ENCODE measurements at regions of chr11 and their contacts with region 1.

Region 1: GRCh38 chr11:83159902-83160865 is 3.3 kb downstream of the PCF11 start:
- DNase-seq: no peak
- H3K4me3 ChIP-seq: peak overlapping the region; percentile 92
- H3K27me3 ChIP-seq: no peaks in the 10 kb centered on the region
- CTCF ChIP-seq: no peak

Region 2: DNA sequence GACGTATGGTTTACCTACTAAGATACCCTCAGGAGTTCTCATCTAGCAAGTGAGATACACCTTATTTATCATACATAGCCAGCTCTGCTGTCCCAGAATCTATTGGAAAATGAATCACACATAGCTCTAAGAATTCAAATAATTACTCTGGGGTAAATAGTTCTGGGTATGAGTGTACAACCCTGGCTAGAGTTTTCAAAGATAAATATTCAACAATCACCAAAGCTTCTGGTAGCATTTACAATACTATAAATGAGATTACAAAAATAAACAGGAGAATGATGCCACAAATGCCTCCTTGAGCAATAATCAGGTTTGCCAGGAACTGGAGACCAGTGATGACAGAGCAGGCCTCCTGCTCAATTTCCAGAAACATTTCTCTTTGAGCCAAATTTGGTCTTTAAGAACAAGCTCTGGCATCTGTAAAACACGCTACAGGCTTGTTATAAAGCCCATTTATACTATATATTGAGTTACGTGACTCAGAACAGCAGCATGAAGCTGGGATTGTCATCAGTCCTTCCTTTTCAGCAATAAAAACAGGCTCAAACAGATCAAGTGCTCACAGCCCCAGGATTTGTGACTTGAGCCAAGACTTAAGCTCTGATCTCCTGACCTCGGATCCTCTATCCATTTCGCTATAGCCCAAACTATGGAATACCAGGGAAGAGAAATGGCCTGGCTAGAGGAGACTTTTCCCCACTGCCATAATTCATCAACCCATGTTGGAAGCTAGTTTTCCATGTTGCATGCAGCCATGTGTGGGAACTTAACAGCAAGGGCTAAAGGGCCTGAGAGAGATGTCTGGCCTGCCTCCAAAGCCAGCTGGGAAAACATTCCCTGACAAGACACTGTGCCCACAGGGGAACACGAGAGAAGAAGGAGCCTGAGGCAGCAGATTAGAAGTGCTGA is 108.2 kb before region 1 on chr11:
- CTCF ChIA-PET with region 1: no interaction called
- POLR2A ChIA-PET with region 1: interaction called, 19 read pairs
- DNase-seq: peak; percentile 97
- H3K4me3 ChIP-seq: no peak overlapping the region
- H3K27me3 ChIP-seq: no peaks in the 10 kb centered on the region
- CTCF ChIP-seq: no peak

Region 3: GRCh38 chr11:83102834-83103233 is 57.4 kb before region 1 on chr11:
- CTCF ChIA-PET with region 1: interaction called, 4 read pairs
- POLR2A ChIA-PET with region 1: interaction called, 10 read pairs
- DNase-seq: no peak
- H3K4me3 ChIP-seq: no peak overlapping the region
- H3K27me3 ChIP-seq: no peaks in the 10 kb centered on the region
- CTCF ChIP-seq: no peak

Measured in BJ (cell line).